ENCODE measurements at regions of chr1 and their contacts with region 1.

Region 1: GRCh38 chr1:6727535-6727934 is 25.9 kb upstream of the DNAJC11 start:
- DNase-seq: peak; percentile 74
- H3K4me3 ChIP-seq: no peak overlapping the region
- H3K27ac ChIP-seq: no peak overlapping the region
- H3K4me1 ChIP-seq: peaks cover 6% of the 10 kb centered on the region
- H3K27me3 ChIP-seq: no peaks in the 10 kb centered on the region

Region 2: GRCh38 chr1:6683434-6683833 is 44.1 kb before region 1 on chr1:
- in situ Hi-C with region 1: no loop called
- DNase-seq: no peak
- H3K4me3 ChIP-seq: no peak overlapping the region
- H3K27ac ChIP-seq: no peak overlapping the region
- H3K4me1 ChIP-seq: peaks cover 27% of the 10 kb centered on the region
- H3K27me3 ChIP-seq: no peaks in the 10 kb centered on the region

Region 3: DNA sequence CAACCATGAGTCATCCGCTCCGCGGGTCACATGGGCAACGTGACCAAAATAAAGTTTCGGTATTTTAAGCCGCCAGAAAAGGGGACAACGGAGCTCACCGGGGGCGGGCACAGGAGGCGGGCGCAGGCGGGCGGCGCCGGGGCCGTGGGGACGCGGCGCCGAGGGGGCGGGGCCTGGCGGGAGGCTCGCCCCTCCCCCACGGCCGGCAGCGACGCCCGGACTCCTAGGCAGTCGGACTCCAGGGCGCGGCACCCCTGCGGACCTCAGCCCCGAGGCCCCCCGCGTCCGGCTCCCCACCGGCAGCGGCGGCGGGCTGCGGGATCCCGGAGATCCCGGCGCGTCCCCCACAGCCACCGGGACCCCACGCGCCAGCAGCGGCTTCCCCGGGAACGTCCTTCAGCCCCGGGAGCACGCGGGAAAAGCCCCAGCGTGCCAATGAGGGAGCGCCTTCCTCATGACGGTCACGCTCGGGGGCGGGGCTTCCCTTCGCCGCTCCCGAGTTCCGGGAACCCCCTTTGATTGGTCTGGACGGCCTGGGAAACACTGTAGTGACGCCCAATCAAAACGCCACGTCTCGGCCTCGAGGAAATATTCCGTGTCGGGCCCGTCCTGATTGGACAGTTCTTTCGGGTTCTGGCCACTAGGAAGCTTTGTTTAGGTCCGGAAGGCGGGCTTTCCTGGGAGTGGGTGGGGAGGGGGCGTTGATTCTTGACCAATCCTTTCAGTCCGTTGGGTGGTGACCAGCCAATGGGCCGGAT is 57.2 kb after region 1 on chr1:
- in situ Hi-C with region 1: no loop called
- DNase-seq: peak; percentile 100
- H3K4me3 ChIP-seq: peak overlapping the region; percentile 89
- H3K27ac ChIP-seq: peak overlapping the region; percentile 95
- H3K4me1 ChIP-seq: peaks cover 6% of the 10 kb centered on the region; the same call in 1 of the 2 replicates
- H3K27me3 ChIP-seq: no peaks in the 10 kb centered on the region

Region 4: DNA sequence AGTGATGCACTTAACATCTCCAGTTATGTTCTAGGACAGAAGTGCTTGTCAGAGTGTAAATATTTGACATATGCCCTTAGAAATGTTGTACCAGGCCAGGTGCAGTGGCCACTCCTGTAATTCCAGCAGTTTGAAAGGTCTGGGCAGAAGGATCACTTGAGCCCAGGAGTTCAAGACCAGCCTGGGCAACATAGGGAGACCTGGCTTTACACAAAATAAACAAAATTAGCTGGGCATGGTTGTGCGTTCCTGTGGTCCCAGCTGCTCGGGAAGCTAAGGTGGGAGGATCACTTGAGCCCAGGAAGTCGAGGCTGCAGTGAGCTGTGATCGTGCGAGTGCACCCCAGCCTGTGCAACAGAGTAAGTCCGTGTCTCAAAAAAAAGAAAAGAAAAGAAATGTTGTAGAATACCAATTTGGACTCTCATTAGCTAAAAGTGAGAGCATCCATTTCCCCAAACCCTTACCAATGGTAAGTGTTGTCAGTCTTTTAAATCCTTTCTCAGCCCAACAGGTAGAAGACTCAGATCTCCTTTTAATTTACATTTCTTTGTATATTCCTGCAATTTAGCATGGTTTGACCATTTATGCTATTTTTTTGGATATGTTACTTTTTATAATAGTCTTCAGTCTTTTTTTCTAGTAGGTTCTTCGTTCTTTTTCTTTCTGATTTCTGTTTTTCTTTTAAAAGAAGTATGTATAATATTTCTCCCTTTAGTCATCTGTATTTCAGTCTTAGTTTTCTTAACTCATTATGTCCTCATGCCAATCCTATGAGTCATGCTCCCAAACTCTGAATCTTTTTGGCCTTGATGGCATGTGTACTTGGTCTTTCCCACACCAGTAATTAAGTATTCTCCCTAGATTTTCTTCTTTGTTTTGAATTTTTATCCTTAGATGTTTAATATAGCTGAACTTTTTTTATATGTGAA is 132.1 kb after region 1 on chr1:
- in situ Hi-C with region 1: no loop called
- DNase-seq: peak; percentile 93
- H3K4me3 ChIP-seq: peak overlapping the region; percentile 69
- H3K27ac ChIP-seq: peak overlapping the region; percentile 72
- H3K4me1 ChIP-seq: peaks cover 23% of the 10 kb centered on the region
- H3K27me3 ChIP-seq: no peaks in the 10 kb centered on the region

Region 5: GRCh38 chr1:7070389-7071029 is 343.0 kb after region 1 on chr1:
- in situ Hi-C with region 1: loop called (anchors 10 kb)
- DNase-seq: peak; percentile 85
- H3K4me3 ChIP-seq: peak overlapping the region; percentile 77
- H3K27ac ChIP-seq: no peak overlapping the region
- H3K4me1 ChIP-seq: no peaks in the 10 kb centered on the region
- H3K27me3 ChIP-seq: peaks cover 5% of the 10 kb centered on the region; the same call in 1 of the 2 replicates

Region 6: GRCh38 chr1:7218210-7218832 is 490.8 kb after region 1 on chr1:
- in situ Hi-C with region 1: loop called (anchors 10 kb)
- DNase-seq: peak; percentile 57
- H3K4me3 ChIP-seq: no peak overlapping the region
- H3K27ac ChIP-seq: no peak overlapping the region
- H3K4me1 ChIP-seq: peaks cover 3% of the 10 kb centered on the region
- H3K27me3 ChIP-seq: no peaks in the 10 kb centered on the region

Measured in GM23248 (cell line).